Dendritic cell treated with granulocyte-macrophage colony-stimulating factor and Interleukin-4, amounts not matched to agents 40 ng/mL and 50 ng/mL, for 4 days (primary cell): ENCODE measurements at regions of chr7 and their contacts with region 1.

Region 1: DNA sequence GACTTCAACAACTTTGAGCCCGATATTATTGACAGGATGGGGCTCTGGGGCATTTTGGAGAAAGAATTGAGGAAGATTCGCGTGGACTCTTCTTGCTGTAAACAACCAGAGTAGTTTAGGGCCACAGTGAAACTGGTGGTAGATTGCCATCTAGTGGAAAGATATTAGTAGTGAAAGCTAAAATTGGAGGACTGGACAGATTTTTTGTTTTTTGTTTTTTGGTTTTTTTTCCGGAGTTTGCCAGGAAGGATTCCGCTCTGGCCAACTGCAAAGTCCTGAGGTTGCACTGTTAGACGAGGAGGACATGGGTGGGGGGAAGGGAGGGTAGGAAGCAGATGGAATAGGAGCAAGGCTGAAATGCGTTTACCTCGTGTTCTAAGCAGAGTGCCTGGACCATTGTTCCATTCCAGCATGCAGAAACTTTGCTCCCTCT is 11.7 kb downstream of the NOBOX start:
- H3K4me3 Mint-ChIP-seq: no peak overlapping the region
- H3K27ac Mint-ChIP-seq: no peak overlapping the region
- H3K4me1 Mint-ChIP-seq: peaks cover under 1% of the 10 kb centered on the region
- H3K27me3 Mint-ChIP-seq: no peaks in the 10 kb centered on the region

Region 2: GRCh38 chr7:143345428-143345900 is 1046.4 kb before region 1 on chr7:
- intact Hi-C with region 1: no loop called
- H3K4me3 Mint-ChIP-seq: peak overlapping the region; percentile 74
- H3K27ac Mint-ChIP-seq: peak overlapping the region; percentile 45
- H3K4me1 Mint-ChIP-seq: peaks cover 21% of the 10 kb centered on the region
- H3K27me3 Mint-ChIP-seq: peaks cover 21% of the 10 kb centered on the region

Region 3: GRCh38 chr7:144133307-144133706 is 258.5 kb before region 1 on chr7:
- intact Hi-C with region 1: loop called (anchors 5 kb)
- H3K4me3 Mint-ChIP-seq: no peak overlapping the region
- H3K27ac Mint-ChIP-seq: no peak overlapping the region
- H3K4me1 Mint-ChIP-seq: no peaks in the 10 kb centered on the region
- H3K27me3 Mint-ChIP-seq: no peaks in the 10 kb centered on the region

Region 4: GRCh38 chr7:144174613-144175012 is 217.2 kb before region 1 on chr7:
- intact Hi-C with region 1: loop called (anchors 5 kb)
- H3K4me3 Mint-ChIP-seq: no peak overlapping the region
- H3K27ac Mint-ChIP-seq: no peak overlapping the region
- H3K4me1 Mint-ChIP-seq: peaks cover 10% of the 10 kb centered on the region
- H3K27me3 Mint-ChIP-seq: no peaks in the 10 kb centered on the region

Region 5: GRCh38 chr7:144378651-144379050 is 13.2 kb before region 1 on chr7:
- intact Hi-C with region 1: no loop called
- H3K4me3 Mint-ChIP-seq: no peak overlapping the region
- H3K27ac Mint-ChIP-seq: no peak overlapping the region
- H3K4me1 Mint-ChIP-seq: no peaks in the 10 kb centered on the region
- H3K27me3 Mint-ChIP-seq: no peaks in the 10 kb centered on the region

Region 6: GRCh38 chr7:144407266-144407931 is 15.6 kb after region 1 on chr7:
- intact Hi-C with region 1: no loop called
- H3K4me3 Mint-ChIP-seq: no peak overlapping the region
- H3K27ac Mint-ChIP-seq: no peak overlapping the region
- H3K4me1 Mint-ChIP-seq: no peaks in the 10 kb centered on the region
- H3K27me3 Mint-ChIP-seq: peaks cover 9% of the 10 kb centered on the region